Stomach (tissue), 19 donors: ENCODE measurements at regions of chr7 and their contacts with region 1.

Region 1: DNA sequence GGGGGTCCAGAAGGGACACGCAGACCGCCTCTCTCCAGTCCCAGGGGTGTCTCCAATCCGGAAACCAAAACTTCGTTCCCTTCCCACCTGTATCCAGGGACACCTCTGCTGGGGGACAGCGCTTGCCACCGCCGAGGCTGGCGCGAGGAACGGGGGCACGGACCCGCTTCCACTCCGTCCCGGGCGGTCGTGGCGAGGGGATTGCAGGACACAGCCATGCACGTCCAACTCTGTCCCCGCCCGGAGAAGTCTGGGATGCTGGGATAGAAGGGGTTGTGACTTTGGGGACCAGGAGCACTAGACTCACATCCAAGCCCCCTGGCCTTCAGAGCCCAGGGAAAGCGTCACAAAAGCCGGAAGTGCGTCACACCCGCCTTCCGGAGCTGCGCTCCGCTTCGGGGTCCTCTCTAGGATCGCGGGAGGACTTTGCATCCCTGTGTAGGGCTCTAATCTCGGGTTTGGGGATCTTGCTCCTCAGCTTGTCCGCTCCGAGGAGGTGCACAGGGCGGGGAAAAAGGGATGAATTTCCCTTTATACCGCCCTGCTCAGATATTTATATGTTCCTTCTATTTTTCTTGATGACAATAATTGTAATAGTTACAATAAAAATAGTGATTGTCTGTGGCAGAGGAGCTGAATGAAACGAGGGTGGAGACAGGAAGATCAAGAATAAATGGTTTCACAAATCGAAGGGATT is at the start of gene FAM200A:
- DNase-seq: peak; percentile 87 to 98
- H3K4me3 ChIP-seq: peak within 1 kb of the TSS; percentile 63 to 80 (median 72)
- H3K27ac ChIP-seq: peak within 1 kb of the TSS; percentile 80 to 91 (median 81)
- H3K4me1 ChIP-seq: peaks cover 9 to 35% (median 19%) of the 10 kb centered on the region in 4 donors
- H3K27me3 ChIP-seq: no peaks in the 10 kb centered on the region
- CTCF ChIP-seq: no peak
- EP300 ChIP-seq: no peak
- POLR2A ChIP-seq: peak in 2 of 4 donors; percentile 44 to 63
- total RNA-seq, gene FAM200A: 0.45 to 35.9 (median 3.3) TPM

Region 2: GRCh38 chr7:99072126-99072525 is 479.8 kb before region 1 on chr7:
- intact Hi-C with region 1: no loop called
- DNase-seq: no peak
- H3K4me3 ChIP-seq: no peak overlapping the region
- H3K27ac ChIP-seq: no peak overlapping the region
- H3K4me1 ChIP-seq: peaks cover 23 to 43% (median 32%) of the 10 kb centered on the region in 4 donors
- H3K27me3 ChIP-seq: no peaks in the 10 kb centered on the region
- CTCF ChIP-seq: no peak
- EP300 ChIP-seq: no peak
- POLR2A ChIP-seq: no peak

Region 3: DNA sequence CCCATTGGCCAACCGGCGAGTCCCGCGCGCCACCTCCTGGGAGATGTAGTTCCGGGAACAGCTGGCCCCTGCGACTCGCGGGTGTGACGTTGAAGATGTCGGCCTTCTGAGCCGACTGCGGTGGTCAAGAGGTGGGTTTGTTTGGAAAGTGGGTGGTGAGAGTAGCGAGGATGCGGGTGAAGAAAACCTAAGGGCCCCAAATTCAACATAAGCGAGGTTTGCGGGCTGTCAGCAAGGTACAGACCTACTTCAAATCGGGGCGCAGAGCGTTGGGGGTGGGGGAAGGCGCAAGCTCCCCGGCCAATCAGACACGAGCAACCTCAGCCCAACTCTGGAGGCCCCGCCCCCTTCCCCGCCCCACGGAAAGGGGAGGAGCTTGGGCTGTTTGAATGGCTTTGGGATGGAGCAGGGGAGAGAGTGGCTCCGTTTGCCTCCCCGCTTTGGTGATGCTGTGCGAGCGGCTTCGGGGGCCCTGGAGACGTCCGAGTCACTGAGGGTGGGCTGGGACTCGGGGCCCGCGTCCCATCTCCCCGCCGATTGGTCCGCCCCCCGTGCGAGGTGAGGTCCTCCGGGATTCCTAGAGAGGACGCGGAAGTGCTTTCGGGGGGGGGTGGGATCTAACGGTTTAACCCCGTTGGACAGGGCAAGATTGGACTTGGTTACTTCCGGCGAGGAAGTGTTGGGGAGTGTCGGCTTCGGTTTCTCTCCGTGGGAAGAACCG is 47.2 kb before region 1 on chr7 and contains the start of gene ZKSCAN5:
- intact Hi-C with region 1: loop called (anchors 10 kb)
- DNase-seq: peak; percentile 99
- H3K4me3 ChIP-seq: peak within 1 kb of the TSS; percentile 67 to 82 (median 76)
- H3K27ac ChIP-seq: peak within 1 kb of the TSS; percentile 93 to 96 (median 95)
- H3K4me1 ChIP-seq: peaks cover 26 to 54% (median 46%) of the 10 kb centered on the region in 4 donors
- H3K27me3 ChIP-seq: no peaks in the 10 kb centered on the region
- CTCF ChIP-seq: peak in 2 of 7 experiments; percentile 13 to 22
- EP300 ChIP-seq: no peak
- POLR2A ChIP-seq: no peak
- total RNA-seq, gene ZKSCAN5: 0.58 to 11.4 (median 4.0) TPM